ENCODE measurements at regions of chr6 and their contacts with region 1.

Region 1: GRCh38 chr6:33147807-33148666 is 44.2 kb downstream of the COL11A2 start:
- DNase-seq: peak in 1 of 2 donors; percentile 54
- ATAC-seq: no peak
- H3K4me3 ChIP-seq: no peak overlapping the region
- H3K4me3 Mint-ChIP-seq: no peak overlapping the region
- H3K27ac ChIP-seq: no peak overlapping the region
- H3K27ac Mint-ChIP-seq: no peak overlapping the region
- H3K4me1 ChIP-seq: peaks cover 3% of the 10 kb centered on the region
- H3K4me1 Mint-ChIP-seq: peaks cover 2 to 5% of the 10 kb centered on the region in 2 donors
- H3K27me3 ChIP-seq: no peaks in the 10 kb centered on the region
- H3K27me3 Mint-ChIP-seq: peaks cover 12 to 20% of the 10 kb centered on the region in 2 donors
- CTCF ChIP-seq: peak; percentile 54

Region 2: DNA sequence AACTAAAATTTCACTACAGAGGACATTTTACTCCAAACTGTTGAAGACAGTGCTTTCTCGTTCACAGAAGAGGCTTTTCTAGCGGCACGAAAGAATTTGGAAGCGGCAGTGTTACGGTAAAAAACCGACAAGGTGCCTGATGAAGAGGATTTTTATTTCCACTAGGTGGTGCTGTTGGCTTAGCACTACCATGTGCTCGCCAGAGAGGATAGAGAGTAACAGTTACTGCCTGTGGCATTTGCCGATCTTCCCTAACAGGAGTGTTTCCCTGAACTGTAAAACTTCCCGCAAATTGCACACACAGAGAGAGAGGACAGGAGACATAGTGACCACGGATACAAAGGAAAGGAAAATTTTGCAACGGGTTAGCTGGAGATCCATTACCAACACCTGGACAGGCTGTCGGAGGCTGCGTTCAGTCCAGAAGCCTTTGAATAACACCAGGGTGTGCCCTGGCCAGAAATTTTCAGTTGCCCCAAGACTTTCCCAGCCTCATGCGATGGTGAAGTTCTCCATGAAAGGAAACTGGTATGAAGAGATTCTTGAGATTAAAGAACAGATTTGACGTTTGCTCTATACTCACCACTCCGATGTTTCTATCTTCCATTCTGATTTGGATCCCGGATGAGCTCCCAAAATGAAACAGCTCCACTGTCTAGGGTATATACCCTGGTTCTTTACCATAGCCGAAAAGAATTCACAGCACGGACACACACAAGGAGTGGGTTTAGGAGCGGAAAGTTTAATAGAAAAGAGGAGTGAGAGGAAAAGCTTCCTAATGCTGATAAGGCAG is 24.1 kb before region 1 on chr6:
- intact Hi-C with region 1: loop called (anchors 2 kb)
- DNase-seq: peak in 1 of 2 donors; percentile 53
- ATAC-seq: peak in 2 of 3 donors; percentile 55 to 63
- H3K4me3 ChIP-seq: no peak overlapping the region
- H3K4me3 Mint-ChIP-seq: no peak overlapping the region
- H3K27ac ChIP-seq: no peak overlapping the region
- H3K27ac Mint-ChIP-seq: no peak overlapping the region
- H3K4me1 ChIP-seq: no peaks in the 10 kb centered on the region
- H3K4me1 Mint-ChIP-seq: no peaks in the 10 kb centered on the region
- H3K27me3 ChIP-seq: no peaks in the 10 kb centered on the region
- H3K27me3 Mint-ChIP-seq: peaks cover 18 to 21% of the 10 kb centered on the region in 2 donors
- CTCF ChIP-seq: peak; percentile 38